Sciatic nerve (tissue), 2 donors: ENCODE measurements at regions of chr2 and their contacts with region 1.

Region 1: DNA sequence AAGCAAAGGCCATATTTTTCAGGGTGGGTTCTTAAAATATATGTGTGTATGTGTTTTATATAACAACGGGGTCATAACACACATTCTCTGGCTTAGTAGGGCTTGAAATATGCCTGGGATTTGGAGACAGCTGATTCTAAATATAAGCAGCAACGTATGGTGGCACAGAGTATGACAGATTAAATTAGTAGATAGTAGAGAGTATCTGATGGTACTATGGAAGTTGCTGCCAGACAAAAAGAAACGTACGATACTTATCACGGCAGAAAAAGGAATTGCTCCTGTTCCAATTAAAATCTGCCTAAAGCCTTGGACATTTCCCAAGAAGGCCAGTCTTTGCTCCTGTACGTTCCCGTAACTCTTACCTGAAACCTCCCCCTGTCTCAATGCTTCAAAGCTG is 607.9 kb upstream of the ID2 start:
- DNase-seq: no peak
- ATAC-seq: no peak

Region 2: DNA sequence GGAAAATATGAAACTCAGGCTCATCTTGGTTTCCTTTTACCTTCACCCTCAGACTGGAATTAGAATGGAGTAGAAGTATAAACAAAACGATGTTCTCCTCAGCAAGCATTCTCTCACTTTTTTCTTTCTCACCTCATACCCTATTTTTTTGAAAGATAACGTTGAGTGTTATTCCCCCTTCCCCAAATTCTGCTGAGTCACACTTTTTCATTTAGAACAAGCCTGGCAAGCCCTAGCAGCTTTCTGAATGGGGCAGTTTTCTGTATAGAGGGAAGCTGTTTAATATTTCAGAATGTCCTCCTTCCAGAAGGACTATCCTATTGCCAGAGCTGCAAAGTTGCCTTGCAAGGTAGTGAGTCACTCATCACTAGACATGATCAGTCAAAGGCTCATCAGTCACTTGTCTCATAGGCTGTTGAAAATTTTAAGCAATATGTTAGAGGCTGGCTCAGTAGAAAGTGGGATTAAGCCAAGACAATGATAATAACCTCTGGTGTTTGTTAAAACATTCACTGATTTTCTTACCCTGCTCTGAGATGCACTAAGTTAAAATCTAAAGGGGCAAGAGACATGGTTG is 740.6 kb before region 1 on chr2:
- intact Hi-C with region 1: loop called (anchors 5 kb)
- DNase-seq: no peak
- ATAC-seq: no peak